Panc1 (cell line): ENCODE measurements at regions of chr12 and their contacts with region 1.

Region 1: GRCh38 chr12:31589904-31590641 is 863 bp downstream of the DENND5B start:
- DNase-seq: peak; percentile 46
- ATAC-seq: peak; percentile 75
- H3K4me3 ChIP-seq: peak overlapping the region; percentile 72 to 91
- H3K27ac ChIP-seq: peak overlapping the region; percentile 86
- H3K4me1 ChIP-seq: peaks cover 30% of the 10 kb centered on the region
- H3K27me3 ChIP-seq: no peaks in the 10 kb centered on the region
- CTCF ChIP-seq: peak; percentile 64

Region 2: GRCh38 chr12:31536672-31537071 is 53.4 kb before region 1 on chr12:
- CTCF ChIA-PET with region 1: no interaction called
- POLR2A ChIA-PET with region 1: no interaction called
- in situ Hi-C with region 1: no loop called
- intact Hi-C with region 1: loop called (anchors 10 kb)
- DNase-seq: no peak
- ATAC-seq: no peak
- H3K4me3 ChIP-seq: no peak overlapping the region
- H3K27ac ChIP-seq: no peak overlapping the region
- H3K4me1 ChIP-seq: peaks cover 4% of the 10 kb centered on the region; the same call in 1 of the 2 replicates
- H3K27me3 ChIP-seq: no peaks in the 10 kb centered on the region
- CTCF ChIP-seq: no peak